Panc1 (cell line): ENCODE measurements at regions of chr6 and their contacts with region 1.

Region 1: GRCh38 chr6:100057941-100058340 is 63.9 kb upstream of the MCHR2 start:
- DNase-seq: no peak
- ATAC-seq: no peak
- H3K4me3 ChIP-seq: no peak overlapping the region
- H3K27ac ChIP-seq: no peak overlapping the region
- H3K4me1 ChIP-seq: no peaks in the 10 kb centered on the region
- H3K27me3 ChIP-seq: no peaks in the 10 kb centered on the region
- CTCF ChIP-seq: no peak

Region 2: GRCh38 chr6:99993146-99993532 is 64.8 kb before region 1 on chr6:
- CTCF ChIA-PET with region 1: no interaction called
- POLR2A ChIA-PET with region 1: interaction called, 17 read pairs
- in situ Hi-C with region 1: no loop called
- intact Hi-C with region 1: no loop called
- DNase-seq: no peak
- ATAC-seq: no peak
- H3K4me3 ChIP-seq: no peak overlapping the region
- H3K27ac ChIP-seq: no peak overlapping the region
- H3K4me1 ChIP-seq: no peaks in the 10 kb centered on the region
- H3K27me3 ChIP-seq: peaks cover 2% of the 10 kb centered on the region; the same call in 1 of the 2 replicates
- CTCF ChIP-seq: no peak